ENCODE measurements at regions of chr5 and their contacts with region 1.

Region 1: GRCh38 chr5:14644623-14645237 is 19.8 kb upstream of the OTULIN start:
- DNase-seq: no peak
- ATAC-seq: no peak
- H3K4me3 Mint-ChIP-seq: no peak overlapping the region
- H3K27ac Mint-ChIP-seq: no peak overlapping the region
- H3K4me1 Mint-ChIP-seq: peaks cover 8% of the 10 kb centered on the region
- H3K27me3 Mint-ChIP-seq: peaks cover 27% of the 10 kb centered on the region

Region 2: DNA sequence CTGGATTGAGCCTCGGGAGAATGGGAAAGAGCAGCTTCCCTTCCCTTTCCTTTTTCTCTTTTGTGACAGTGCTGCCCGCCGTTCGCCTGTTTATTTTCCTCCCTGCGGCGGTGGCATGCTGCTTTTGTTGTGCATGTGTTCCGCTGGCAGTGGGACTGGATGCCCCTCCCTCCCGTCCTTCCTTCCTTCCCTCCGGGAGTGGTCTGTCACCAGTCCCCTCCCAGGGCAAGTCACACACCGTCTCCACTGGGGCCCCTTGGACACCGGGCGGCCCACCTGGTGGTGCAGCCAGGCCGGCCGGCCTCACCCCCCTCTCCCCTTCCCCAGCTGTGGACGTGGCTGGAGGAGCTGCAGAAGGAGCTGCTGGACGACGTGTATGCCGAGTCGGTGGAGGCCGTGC is 286.9 kb before region 1 on chr5:
- CTCF ChIA-PET with region 1: interaction called, 163 read pairs
- DNase-seq: no peak
- ATAC-seq: no peak
- H3K4me3 Mint-ChIP-seq: no peak overlapping the region
- H3K27ac Mint-ChIP-seq: no peak overlapping the region
- H3K4me1 Mint-ChIP-seq: peaks cover 17% of the 10 kb centered on the region
- H3K27me3 Mint-ChIP-seq: peaks cover 5% of the 10 kb centered on the region

Region 3: GRCh38 chr5:14386884-14387624 is 257.7 kb before region 1 on chr5:
- CTCF ChIA-PET with region 1: interaction called, 13 read pairs
- DNase-seq: no peak
- ATAC-seq: no peak
- H3K4me3 Mint-ChIP-seq: no peak overlapping the region
- H3K27ac Mint-ChIP-seq: no peak overlapping the region
- H3K4me1 Mint-ChIP-seq: peaks cover 11% of the 10 kb centered on the region
- H3K27me3 Mint-ChIP-seq: peaks cover 26% of the 10 kb centered on the region

Region 4: DNA sequence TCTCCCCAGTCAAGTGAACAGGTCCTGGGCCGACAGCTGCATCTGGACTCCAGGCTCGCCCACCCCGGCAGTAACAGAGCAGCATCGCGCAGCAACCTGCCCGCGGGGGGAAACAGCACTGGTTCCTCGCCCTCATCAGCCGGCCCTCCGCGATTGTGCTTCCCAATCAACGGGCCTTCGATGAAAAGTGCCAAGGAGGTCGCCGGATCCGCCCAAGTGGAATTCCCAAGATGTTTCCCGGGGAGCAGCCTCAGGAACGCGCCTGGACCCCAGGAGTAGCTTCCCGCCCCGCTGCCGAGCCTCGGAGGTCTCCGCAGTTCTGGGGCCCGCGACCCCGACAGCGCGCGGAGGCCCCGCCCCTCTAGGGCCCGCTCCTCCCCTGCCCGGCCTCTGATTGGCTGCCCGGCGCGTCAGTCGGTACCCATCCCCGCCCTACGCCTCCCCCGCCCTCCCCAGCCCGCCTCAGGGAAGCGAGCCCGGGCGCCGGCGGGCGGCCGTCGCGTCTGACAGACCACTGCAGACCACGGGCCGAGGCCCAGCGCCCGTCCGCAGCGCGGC is 63.3 kb before region 1 on chr5 and contains the start of gene OTULINL:
- CTCF ChIA-PET with region 1: interaction called, 11 read pairs
- DNase-seq: peak; percentile 91
- ATAC-seq: peak; percentile 92
- H3K4me3 Mint-ChIP-seq: peak within 1 kb of the TSS; percentile 80
- H3K27ac Mint-ChIP-seq: peak within 1 kb of the TSS; percentile 79
- H3K4me1 Mint-ChIP-seq: peaks cover 26% of the 10 kb centered on the region
- H3K27me3 Mint-ChIP-seq: peaks cover 24% of the 10 kb centered on the region
- total RNA-seq, gene OTULINL: 46.7 to 61.5 TPM

Region 5: GRCh38 chr5:14628346-14628745 is 16.4 kb before region 1 on chr5:
- CTCF ChIA-PET with region 1: no interaction called
- DNase-seq: peak; percentile 76
- ATAC-seq: peak; percentile 49
- H3K4me3 Mint-ChIP-seq: no peak overlapping the region
- H3K27ac Mint-ChIP-seq: no peak overlapping the region
- H3K4me1 Mint-ChIP-seq: no peaks in the 10 kb centered on the region
- H3K27me3 Mint-ChIP-seq: peaks cover 2% of the 10 kb centered on the region

Region 6: DNA sequence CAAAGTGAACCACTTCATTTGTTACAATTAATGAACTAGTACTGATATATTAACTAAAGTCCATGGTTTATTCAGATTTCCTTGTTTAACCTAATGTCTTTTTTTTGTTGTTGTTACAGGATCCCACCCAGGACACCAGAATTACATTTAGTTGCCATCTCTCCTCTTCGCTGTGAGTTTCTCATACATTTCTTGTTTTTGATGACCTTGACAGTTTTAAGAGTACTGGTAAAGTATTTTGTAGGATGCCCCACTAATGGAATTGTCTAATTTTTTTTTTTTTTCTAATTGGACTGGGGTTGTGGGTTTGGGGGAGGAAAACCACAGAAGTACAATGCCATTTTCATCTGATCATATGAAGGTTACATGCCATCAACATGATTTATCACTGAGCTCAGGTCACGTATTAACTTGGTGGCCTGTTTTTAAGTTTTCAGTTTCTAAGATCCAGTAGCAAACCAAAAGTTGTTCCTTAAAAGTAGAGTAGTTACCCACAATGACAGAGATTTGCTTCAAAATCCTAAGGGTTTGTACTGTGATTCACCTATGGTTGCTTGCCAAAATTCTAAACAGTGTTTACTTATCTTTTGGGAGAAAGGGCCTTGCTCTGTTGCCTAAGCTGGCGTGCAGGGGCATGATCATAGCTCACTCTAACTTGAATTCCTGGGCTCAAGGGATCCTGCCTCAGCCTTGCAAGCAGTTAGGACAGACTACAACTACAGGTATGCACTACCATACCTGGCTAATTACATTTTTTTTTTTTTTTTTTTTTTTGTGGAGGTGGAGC is 15.3 kb after region 1 on chr5:
- CTCF ChIA-PET with region 1: interaction called, 17 read pairs
- DNase-seq: no peak
- ATAC-seq: no peak
- H3K4me3 Mint-ChIP-seq: no peak overlapping the region
- H3K27ac Mint-ChIP-seq: no peak overlapping the region
- H3K4me1 Mint-ChIP-seq: peaks cover 40% of the 10 kb centered on the region
- H3K27me3 Mint-ChIP-seq: no peaks in the 10 kb centered on the region

Region 7: GRCh38 chr5:14775857-14776256 is 131.1 kb after region 1 on chr5:
- CTCF ChIA-PET with region 1: no interaction called
- DNase-seq: no peak
- ATAC-seq: no peak
- H3K4me3 Mint-ChIP-seq: no peak overlapping the region
- H3K27ac Mint-ChIP-seq: no peak overlapping the region
- H3K4me1 Mint-ChIP-seq: no peaks in the 10 kb centered on the region
- H3K27me3 Mint-ChIP-seq: no peaks in the 10 kb centered on the region